HepG2 (cell line): ENCODE measurements at regions of chr10 and their contacts with region 1.

Region 1: GRCh38 chr10:16777473-16778370 is 39.5 kb downstream of the RSU1 start:
- DNase-seq: peak; percentile 50
- ATAC-seq: peak; percentile 44; the same call in 2 of the 3 replicates
- H3K4me3 ChIP-seq: no peak overlapping the region
- H3K27ac ChIP-seq: no peak overlapping the region
- H3K4me1 ChIP-seq: 0 out of 2 replicates have a peak, but pooled peaks cover 6% of the 10 kb centered on the region
- H3K27me3 ChIP-seq: no peaks in the 10 kb centered on the region
- CTCF ChIP-seq: peak; percentile 68
- EP300 ChIP-seq: no peak
- POLR2A ChIP-seq: no peak
- RAD21 ChIP-seq: peak; percentile 25; the same call in 1 of the 2 replicates

Region 2: GRCh38 chr10:16116404-16117304 is 661.1 kb before region 1 on chr10:
- CTCF ChIA-PET with region 1: no interaction called
- POLR2A ChIA-PET with region 1: no interaction called
- in situ Hi-C with region 1: loop called (anchors 25 kb)
- intact Hi-C with region 1: no loop called
- DNase-seq: peak; percentile 52
- ATAC-seq: peak; percentile 74
- H3K4me3 ChIP-seq: no peak overlapping the region
- H3K27ac ChIP-seq: no peak overlapping the region
- H3K4me1 ChIP-seq: no peaks in the 10 kb centered on the region
- H3K27me3 ChIP-seq: no peaks in the 10 kb centered on the region
- CTCF ChIP-seq: peak; percentile 65
- EP300 ChIP-seq: no peak
- POLR2A ChIP-seq: no peak
- RAD21 ChIP-seq: 0 out of 2 replicates have a peak, but pooled peaks have one; percentile 43

Region 3: DNA sequence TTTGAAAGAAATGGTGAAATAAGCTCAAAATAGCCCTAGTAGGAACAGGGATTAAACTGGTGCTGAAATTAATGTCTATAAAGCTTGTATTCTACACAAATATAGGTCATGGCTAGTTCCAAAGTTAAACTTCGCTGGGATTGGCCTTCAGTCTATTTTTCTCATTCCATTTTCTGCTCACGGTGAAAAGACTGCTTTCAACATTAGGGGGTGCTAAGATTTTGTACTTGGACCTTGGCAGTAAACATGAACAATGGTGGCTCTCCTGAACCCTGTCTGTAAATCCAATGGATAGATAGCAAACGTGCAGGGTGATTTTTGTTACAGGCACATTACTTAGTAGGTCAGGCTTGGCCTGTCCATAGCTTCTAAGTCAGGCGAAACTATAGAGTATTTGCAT is 75.5 kb after region 1 on chr10:
- CTCF ChIA-PET with region 1: no interaction called
- POLR2A ChIA-PET with region 1: no interaction called
- in situ Hi-C with region 1: no loop called
- intact Hi-C with region 1: no loop called
- DNase-seq: peak; percentile 10
- ATAC-seq: peak; percentile 48; the same call in 2 of the 3 replicates
- H3K4me3 ChIP-seq: no peak overlapping the region
- H3K27ac ChIP-seq: no peak overlapping the region
- H3K4me1 ChIP-seq: no peaks in the 10 kb centered on the region
- H3K27me3 ChIP-seq: no peaks in the 10 kb centered on the region
- CTCF ChIP-seq: peak; percentile 56
- EP300 ChIP-seq: no peak
- POLR2A ChIP-seq: no peak
- RAD21 ChIP-seq: no peak

Region 4: DNA sequence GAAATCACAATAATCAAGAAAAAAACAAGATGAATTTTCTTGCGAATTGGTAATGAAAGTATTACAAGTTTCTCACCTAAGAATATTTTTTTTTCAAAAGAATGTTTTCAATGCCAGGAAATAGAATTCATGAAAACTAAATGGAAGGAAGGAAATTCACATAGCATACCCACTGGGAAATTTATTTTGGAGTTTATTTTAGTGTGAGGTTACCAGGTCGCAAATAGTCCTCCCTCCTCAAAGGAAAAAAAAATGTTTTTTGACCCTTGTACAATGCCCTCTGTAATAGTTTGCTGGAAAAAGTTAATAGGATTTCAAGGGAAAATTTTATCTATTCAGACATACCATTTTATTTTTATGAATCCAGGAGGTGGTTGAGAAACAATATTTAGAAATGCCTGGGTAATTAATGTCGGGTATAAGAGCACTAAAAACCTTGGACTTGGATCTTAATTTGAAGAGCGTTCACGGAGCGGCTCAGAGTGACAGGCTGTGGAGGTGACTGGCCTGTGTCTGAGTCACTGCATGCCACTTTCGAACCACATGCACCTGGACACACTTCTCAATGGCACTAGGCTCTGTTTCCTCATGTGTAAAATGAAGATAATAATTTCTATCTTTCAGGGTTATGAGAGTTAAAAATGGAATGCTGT is 323.7 kb after region 1 on chr10:
- CTCF ChIA-PET with region 1: no interaction called
- POLR2A ChIA-PET with region 1: no interaction called
- in situ Hi-C with region 1: no loop called
- intact Hi-C with region 1: no loop called
- DNase-seq: no peak
- ATAC-seq: peak; percentile 69
- H3K4me3 ChIP-seq: no peak overlapping the region; a peak in 1 of 6 replicates
- H3K27ac ChIP-seq: no peak overlapping the region
- H3K4me1 ChIP-seq: peaks cover 9% of the 10 kb centered on the region
- H3K27me3 ChIP-seq: no peaks in the 10 kb centered on the region; a peak in 1 of 5 replicates
- CTCF ChIP-seq: no peak
- EP300 ChIP-seq: no peak
- POLR2A ChIP-seq: no peak
- RAD21 ChIP-seq: no peak